Calu3 (cell line): ENCODE measurements at regions of chr6 and their contacts with region 1.

Region 1: GRCh38 chr6:37059344-37060206 is 54.1 kb downstream of the FGD2 start:
- DNase-seq: peak; percentile 90
- H3K4me3 Mint-ChIP-seq: peak overlapping the region; percentile 53
- H3K27ac Mint-ChIP-seq: peak overlapping the region; percentile 79
- H3K4me1 Mint-ChIP-seq: peaks cover 64% of the 10 kb centered on the region
- H3K27me3 Mint-ChIP-seq: no peaks in the 10 kb centered on the region
- CTCF ChIP-seq: peak; percentile 77

Region 2: DNA sequence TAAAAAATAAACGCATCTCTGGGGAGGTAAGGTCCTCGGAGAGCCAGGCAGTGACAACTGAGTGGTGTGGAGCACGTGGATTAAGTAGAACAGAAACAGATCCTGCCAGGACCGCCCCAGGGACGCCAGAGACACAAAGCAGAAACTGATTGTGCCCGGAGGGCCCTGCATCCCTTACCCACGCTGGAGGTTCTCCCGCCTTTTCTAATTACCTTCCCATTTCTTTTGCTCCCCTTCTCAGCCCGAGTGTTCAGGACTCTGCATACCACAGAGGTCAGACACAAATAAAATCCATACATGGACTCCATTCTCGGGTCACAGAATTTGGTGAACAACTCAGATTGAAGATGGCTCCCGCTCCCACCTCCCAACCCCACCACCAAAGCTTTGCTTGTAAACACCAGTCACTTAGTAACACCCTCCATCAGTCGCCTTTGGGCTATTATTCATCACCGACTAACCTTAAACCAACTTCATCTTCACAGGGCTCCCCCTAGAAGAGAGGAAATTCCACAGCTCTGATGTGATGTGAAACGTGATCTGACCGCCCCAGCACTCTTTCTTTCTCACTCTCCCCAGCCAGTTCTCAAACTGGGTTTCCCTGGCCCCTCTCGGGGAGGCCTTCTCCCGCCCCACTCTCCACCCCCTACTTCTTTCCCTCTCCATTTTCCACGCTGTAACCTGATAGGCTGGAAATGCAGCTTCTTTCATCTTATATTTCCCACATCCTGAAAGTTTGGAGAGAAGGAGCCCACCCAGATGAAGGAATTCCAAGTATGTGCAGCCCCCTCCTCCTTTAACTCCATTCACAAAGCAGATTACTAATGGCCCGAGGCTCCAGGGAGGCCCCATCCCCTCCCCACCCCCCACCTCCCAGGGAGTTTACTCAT is 77.9 kb after region 1 on chr6:
- CTCF ChIA-PET with region 1: interaction called, 11 read pairs
- intact Hi-C with region 1: loop called (anchors 2 kb)
- DNase-seq: peak; percentile 80
- H3K4me3 Mint-ChIP-seq: peak overlapping the region; percentile 62
- H3K27ac Mint-ChIP-seq: peak overlapping the region; percentile 98
- H3K4me1 Mint-ChIP-seq: peaks cover 62% of the 10 kb centered on the region
- H3K27me3 Mint-ChIP-seq: no peaks in the 10 kb centered on the region
- CTCF ChIP-seq: no peak